ENCODE measurements at regions of chr19 and their contacts with region 1.

Region 1: GRCh38 chr19:23969630-23970029 is 54.9 kb downstream of the ZNF726 start:
- DNase-seq: no peak
- ATAC-seq: no peak
- H3K4me3 ChIP-seq: no peak overlapping the region
- H3K27ac ChIP-seq: no peak overlapping the region
- H3K4me1 ChIP-seq: no peaks in the 10 kb centered on the region
- H3K27me3 ChIP-seq: peaks cover 0 to 5% of the 10 kb centered on the region in 2 donors

Region 2: GRCh38 chr19:23787106-23787505 is 182.5 kb before region 1 on chr19:
- intact Hi-C with region 1: no loop called
- DNase-seq: no peak
- ATAC-seq: no peak
- H3K4me3 ChIP-seq: no peak overlapping the region
- H3K27ac ChIP-seq: no peak overlapping the region
- H3K4me1 ChIP-seq: no peaks in the 10 kb centered on the region
- H3K27me3 ChIP-seq: no peaks in the 10 kb centered on the region

Region 3: DNA sequence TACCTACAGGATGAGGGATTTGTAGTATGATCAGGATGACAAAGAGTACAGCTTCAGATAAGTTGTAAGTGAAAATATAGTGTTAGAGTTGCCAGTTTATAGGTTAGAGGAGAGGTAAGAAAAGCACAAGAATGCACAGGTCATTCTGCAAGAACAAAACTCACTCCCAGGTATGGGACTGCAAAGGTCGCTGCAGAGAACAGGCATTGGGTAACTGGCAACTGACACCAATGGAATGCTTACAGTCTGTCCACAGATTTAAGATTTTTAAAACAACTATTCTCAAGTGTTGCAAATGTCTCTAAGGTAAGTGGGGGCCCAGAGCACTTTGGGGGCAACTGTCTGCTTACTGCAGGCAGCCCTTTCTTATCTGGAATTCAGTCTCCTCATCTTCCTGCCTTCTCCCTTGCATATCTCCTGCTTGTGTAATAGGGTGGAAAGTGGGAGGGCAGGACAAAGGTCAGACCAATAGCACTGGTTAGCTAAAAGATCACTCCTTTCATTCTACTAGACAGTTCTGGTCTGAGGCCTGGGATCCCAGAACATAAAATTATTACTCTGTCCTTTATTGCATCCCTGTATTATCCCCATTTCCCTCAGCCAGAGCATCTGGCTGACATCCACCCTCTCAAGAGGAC is 97.2 kb before region 1 on chr19:
- intact Hi-C with region 1: loop called in 1 of 2 experiments (anchors 5 kb)
- DNase-seq: no peak
- ATAC-seq: no peak
- H3K4me3 ChIP-seq: no peak overlapping the region
- H3K27ac ChIP-seq: no peak overlapping the region
- H3K4me1 ChIP-seq: no peaks in the 10 kb centered on the region
- H3K27me3 ChIP-seq: no peaks in the 10 kb centered on the region

Region 4: GRCh38 chr19:23882493-23882892 is 87.1 kb before region 1 on chr19:
- intact Hi-C with region 1: loop called in 1 of 2 experiments (anchors 5 kb)
- DNase-seq: no peak
- ATAC-seq: no peak
- H3K4me3 ChIP-seq: no peak overlapping the region
- H3K27ac ChIP-seq: no peak overlapping the region
- H3K4me1 ChIP-seq: no peaks in the 10 kb centered on the region
- H3K27me3 ChIP-seq: no peaks in the 10 kb centered on the region

Measured in aorta (tissue), 5 donors.